ENCODE measurements at regions of chr12 and their contacts with region 1.

Region 1: DNA sequence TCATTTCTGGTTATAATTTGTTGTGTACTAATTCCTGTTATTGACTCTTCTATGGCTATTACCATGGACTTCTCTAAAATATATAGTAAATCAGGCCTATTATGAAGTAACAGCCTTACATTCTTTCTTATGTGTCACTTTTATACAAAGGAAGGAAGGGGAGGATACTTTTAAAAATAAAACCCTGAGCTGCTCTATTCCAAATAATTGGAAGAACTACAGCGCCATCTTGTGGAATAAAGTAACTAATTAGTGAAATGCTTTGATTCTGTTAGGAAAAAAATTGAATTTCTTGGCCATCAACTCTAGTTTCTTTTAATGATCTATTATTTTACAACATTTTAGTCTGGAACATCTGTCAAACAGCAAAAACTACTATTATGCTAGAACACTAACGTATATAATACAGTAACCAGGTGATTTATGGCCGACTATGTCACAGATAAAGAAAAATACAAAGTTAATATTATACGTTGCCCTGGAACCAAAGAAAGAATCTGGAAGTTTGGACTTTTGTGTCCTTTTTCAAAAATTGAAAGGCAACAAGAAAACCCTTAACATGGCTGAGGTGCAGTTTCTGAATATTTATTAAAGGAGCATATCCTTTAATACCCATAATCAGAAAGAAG is 55.0 kb upstream of the NELL2 start:
- DNase-seq: no peak
- ATAC-seq: peak; percentile 53 to 69 (median 60)
- H3K4me3 ChIP-seq: no peak overlapping the region
- H3K27ac ChIP-seq: no peak overlapping the region
- H3K4me1 ChIP-seq: no peaks in the 10 kb centered on the region
- H3K27me3 ChIP-seq: no peaks in the 10 kb centered on the region
- CTCF ChIP-seq: peak; percentile 59 to 66 (median 61)
- POLR2A ChIP-seq: no peak

Region 2: GRCh38 chr12:44015335-44015941 is 915.6 kb before region 1 on chr12:
- intact Hi-C with region 1: loop called in 1 of 2 experiments (anchors 5 kb)
- DNase-seq: no peak
- ATAC-seq: peak; percentile 62 to 78 (median 64)
- H3K4me3 ChIP-seq: no peak overlapping the region
- H3K27ac ChIP-seq: no peak overlapping the region
- H3K4me1 ChIP-seq: peaks cover 0 to 3% (median 0%) of the 10 kb centered on the region in 4 donors
- H3K27me3 ChIP-seq: no peaks in the 10 kb centered on the region
- CTCF ChIP-seq: peak; percentile 54 to 62 (median 61)
- POLR2A ChIP-seq: no peak

Region 3: GRCh38 chr12:44848703-44849085 is 82.4 kb before region 1 on chr12:
- intact Hi-C with region 1: no loop called
- DNase-seq: no peak
- ATAC-seq: no peak
- H3K4me3 ChIP-seq: no peak overlapping the region
- H3K27ac ChIP-seq: no peak overlapping the region
- H3K4me1 ChIP-seq: no peaks in the 10 kb centered on the region
- H3K27me3 ChIP-seq: no peaks in the 10 kb centered on the region
- CTCF ChIP-seq: no peak
- POLR2A ChIP-seq: no peak

Region 4: DNA sequence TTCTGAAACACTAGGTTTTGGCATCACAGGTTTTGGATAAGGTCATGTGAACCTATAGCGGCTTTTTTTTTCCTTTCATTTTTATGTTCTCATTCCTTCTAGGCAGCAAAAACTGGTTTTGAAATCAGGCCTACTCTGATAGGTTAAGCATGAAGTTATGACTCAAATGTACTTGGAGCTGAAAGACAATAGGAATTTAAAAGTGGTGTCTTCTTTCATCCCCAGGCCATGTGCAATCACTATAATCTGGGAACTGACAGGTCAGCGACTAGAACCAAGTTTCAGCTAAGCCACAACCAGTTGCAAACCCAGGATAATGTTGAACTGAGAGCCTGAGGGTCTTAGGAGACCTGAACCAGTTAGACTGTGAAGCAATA is 359.1 kb after region 1 on chr12:
- intact Hi-C with region 1: no loop called
- DNase-seq: no peak
- ATAC-seq: no peak
- H3K4me3 ChIP-seq: no peak overlapping the region
- H3K27ac ChIP-seq: no peak overlapping the region
- H3K4me1 ChIP-seq: no peaks in the 10 kb centered on the region
- H3K27me3 ChIP-seq: no peaks in the 10 kb centered on the region
- CTCF ChIP-seq: no peak
- POLR2A ChIP-seq: no peak

Measured in right lobe of liver (tissue), 6 donors.